ENCODE measurements at regions of chr9 and their contacts with region 1.

Region 1: DNA sequence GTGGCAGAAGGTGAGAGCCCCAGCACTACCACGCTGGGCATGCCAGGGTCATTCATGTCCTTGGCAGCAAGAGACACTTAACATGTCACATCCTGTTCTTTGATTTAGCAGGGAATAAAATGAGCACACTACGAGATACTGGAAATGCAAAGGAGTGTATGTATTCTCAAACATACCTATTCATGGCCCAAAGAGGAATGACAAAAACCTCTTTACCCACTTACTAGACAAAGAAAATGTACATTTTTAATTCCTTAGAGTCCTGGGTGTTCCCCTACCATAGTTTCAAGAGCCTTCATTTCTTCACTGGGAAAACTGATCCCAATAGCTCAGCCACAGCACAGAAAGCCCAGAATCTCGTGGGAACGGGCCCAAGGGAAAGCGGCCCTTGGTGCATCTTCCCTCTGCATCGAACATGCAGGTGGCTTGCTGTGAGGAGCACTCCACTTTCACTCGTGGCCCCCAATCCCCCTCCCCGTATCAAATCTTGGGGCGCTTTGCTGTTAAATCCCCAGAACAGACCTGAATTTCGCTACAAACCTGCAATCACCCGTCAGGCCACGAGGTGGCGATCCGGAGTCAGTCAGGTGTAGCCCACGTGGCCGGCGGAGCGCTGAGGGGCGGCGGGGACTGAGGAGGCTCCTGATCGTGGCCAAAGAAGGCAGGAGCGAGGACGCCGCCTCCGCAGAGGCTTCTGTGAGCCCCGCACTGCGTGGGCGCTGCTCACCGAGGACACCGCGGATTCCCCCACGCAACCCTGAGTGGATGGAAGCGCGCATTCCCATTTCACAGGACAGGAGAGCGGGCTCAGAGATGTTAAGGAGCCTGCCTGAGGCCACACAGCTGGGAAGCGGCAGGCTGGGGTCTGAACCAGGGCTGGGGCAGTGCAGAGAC is 91.4 kb downstream of the LMX1B start:
- DNase-seq: peak; percentile 90
- CTCF ChIP-seq: peak; percentile 94

Region 2: DNA sequence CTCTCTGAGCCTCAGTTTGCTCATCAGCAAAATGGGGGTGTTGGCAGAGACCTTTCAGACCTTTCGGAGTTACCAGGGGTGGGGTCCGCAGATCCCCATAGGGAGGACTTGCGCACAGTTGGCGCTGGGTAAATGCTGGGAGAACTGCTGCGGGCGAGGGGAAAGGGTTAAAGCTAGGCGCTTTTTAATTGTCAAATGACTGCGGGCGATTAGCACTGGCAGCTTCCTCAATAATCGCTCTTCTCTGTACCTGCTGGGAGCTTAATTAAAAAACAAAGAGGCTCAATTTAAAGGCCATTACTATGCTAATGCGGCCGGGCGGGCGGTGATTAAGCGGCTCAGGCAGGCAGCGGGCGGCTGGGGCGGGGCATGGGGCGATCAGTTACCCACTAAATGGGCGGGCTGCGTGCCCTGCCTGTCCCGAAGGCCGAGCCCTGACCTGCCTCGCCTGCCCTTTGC is 28.4 kb before region 1 on chr9:
- CTCF ChIA-PET with region 1: interaction called, 16 read pairs
- POLR2A ChIA-PET with region 1: no interaction called
- DNase-seq: no peak
- CTCF ChIP-seq: no peak

Region 3: DNA sequence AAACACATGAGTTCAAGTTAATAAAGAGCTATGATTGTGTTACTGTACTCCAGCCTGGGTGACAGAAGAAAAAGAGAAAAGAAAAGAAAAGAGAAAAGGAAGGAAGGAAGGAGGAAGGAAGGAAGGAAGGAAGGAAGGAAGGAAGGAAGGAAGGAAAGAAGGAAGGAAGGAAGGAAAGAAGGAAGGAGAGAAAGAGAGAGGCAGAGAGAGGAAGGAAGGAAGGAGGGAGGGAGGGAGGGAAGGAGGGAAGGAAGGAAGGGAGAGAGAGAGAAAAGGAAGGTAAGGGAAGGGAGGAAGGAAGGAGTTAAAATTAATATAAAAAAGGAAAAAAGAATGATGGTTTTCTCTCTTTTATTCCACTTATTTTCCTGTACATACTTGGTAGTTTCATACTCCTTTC is 10.3 kb after region 1 on chr9:
- CTCF ChIA-PET with region 1: interaction called, 26 read pairs
- POLR2A ChIA-PET with region 1: no interaction called
- DNase-seq: no peak
- CTCF ChIP-seq: no peak

Region 4: DNA sequence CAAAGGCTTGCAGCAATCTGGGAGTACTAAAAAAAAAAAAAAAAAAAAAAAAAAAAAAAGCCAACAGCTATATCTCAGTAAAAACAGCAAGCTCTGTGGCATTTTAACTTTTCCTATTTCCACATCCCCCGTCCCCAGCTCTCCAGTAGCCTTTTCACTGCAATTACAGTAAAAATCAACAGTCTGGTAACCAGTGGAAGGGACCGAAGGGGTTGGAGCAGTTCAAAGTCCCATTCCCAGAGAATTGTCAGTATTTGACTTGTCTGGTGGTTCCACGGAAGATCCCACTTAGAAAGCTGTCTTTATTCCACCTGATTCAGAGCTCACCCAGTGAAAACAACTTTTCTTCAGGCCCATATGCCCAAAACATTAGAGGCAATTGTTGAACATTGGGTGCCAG is 27.9 kb after region 1 on chr9:
- CTCF ChIA-PET with region 1: interaction called, 26 read pairs
- POLR2A ChIA-PET with region 1: no interaction called
- DNase-seq: no peak
- CTCF ChIP-seq: no peak

Region 5: DNA sequence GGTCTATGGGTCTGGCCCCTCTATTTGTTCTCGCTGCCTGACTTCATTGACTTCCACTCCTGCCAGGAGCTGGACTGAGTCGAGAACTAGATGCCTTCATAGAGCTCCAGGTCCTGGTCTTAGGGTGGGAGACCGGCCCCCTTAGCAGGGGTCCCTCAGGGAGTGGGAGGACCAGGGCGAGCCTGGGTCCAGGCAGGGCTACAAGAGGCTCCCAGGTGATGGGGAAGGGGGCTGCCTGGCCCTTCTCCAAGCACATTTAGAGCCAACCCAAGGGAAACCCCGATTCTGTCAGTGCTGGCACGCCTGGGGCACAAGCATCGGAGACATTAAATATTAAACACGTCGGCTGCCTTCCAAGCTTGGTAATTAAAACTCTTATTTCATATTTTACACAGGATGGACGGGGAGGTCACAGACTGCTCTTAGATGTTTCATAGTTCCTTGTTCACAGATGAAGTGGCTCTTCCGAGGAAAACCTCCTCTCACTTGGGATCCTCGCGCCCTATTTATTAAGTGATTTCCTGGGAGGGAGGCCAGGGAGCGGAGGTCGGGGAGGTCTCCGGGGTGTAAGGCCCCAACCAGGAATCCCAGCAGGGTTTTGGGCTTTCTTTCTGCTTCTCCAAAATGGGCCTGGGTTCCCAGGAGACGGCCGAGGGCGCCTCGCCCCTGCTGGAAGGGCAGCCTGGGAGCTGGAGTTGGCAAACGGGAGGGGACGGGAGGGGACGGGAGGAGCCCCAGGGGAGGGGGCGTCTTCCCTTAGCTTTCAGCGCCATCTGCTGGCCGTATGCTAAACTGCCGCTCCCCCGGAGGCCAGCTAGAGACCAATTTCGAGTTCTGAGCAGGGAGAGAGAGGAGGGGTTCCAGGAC is 76.3 kb after region 1 on chr9:
- CTCF ChIA-PET with region 1: interaction called, 499 read pairs
- POLR2A ChIA-PET with region 1: no interaction called
- DNase-seq: peak; percentile 84
- CTCF ChIP-seq: peak; percentile 97

Region 6: DNA sequence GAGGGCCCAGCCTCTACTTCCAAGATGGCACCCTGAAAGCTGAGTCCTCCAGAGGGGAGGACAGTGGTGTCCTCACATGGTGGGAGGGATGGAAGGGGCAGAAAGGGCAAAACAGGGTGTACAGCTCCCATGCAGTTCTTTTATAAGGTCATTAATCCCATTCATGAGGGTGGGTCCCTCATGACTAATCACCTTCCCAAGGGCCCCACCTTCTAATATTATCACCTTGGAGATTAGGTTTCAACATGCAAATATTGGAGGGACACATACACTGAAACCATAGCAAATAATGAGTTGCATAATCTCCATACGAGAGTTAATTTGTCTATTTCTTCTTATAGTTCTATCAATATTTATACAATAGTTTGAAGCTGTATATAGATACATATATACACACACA is 93.9 kb after region 1 on chr9:
- CTCF ChIA-PET with region 1: interaction called, 63 read pairs
- POLR2A ChIA-PET with region 1: no interaction called
- DNase-seq: no peak
- CTCF ChIP-seq: no peak

Measured in GM10248 (cell line).